Cardiac septum (tissue), 1 donor: ENCODE measurements at regions of chr7 and their contacts with region 1.

Region 1: GRCh38 chr7:1812509-1813393 is 142.7 kb downstream of the ELFN1 start:
- DNase-seq: no peak

Region 2: DNA sequence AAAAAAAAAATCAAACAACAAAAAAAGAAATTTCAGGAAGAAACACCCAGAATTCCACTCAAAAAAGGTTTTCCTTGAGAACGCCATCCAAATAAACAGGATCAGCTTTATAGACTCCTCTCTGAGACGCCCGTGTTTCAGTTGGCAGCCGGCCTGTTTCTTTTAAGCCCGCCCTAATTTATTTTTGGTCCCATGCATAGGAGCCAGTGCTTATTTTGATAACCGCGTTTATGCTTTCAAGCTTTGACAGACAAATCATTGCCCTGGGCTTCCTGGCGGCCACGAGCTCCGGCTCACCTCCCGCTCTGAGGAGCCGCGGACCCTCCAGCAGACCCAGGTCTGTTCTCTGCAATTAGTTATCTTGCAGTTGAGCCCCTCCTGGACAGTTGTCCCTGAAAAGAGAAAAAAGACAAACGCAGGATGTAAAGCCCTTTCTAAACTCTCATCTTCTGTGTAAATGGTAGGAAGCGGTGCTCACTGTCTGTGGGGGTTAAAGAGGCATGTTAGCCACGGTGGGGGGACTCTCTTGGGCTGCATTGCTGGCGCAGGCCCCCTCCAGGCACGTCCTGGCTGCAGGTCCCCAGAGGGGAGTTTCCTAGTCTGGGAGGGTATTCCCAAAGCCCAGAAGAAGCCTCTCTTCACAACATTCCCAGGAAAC is 602.3 kb before region 1 on chr7:
- intact Hi-C with region 1: no loop called
- DNase-seq: no peak

Region 3: DNA sequence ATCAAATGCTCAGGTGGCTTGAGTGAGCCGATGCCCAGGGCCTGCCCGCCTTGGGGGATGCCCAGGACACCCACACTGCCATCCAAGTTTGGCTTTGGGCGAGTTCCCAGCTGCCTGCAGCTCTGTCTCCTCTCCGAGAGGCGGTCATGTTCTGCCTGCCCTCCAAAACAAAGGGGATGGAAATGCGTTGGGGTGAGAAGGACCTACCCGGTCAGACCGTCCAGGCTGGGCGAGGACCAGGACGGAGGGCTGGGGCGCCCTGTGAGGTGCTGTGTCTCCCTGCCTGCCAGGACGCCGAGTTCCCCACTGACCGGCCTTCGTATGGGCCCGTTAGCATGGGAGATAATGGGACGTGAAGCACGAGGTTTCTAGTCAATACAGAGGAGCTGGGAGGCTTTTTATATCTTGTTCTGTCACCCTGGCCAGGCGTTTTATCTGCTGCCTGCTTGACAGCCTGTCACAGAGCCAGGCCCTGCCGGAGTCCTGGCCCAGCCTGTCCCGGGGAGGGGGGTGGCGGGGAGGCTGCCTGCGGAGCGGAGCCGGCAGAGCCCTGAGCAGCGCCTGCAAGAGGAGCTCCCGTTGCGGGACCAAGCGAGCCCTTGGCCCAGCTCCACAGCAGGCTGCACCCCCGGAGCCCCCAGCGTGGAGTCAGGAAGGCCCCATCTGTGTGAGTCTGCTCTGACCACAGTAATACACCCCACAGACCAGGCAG is 164.6 kb before region 1 on chr7:
- intact Hi-C with region 1: no loop called
- DNase-seq: peak; percentile 88

Region 4: DNA sequence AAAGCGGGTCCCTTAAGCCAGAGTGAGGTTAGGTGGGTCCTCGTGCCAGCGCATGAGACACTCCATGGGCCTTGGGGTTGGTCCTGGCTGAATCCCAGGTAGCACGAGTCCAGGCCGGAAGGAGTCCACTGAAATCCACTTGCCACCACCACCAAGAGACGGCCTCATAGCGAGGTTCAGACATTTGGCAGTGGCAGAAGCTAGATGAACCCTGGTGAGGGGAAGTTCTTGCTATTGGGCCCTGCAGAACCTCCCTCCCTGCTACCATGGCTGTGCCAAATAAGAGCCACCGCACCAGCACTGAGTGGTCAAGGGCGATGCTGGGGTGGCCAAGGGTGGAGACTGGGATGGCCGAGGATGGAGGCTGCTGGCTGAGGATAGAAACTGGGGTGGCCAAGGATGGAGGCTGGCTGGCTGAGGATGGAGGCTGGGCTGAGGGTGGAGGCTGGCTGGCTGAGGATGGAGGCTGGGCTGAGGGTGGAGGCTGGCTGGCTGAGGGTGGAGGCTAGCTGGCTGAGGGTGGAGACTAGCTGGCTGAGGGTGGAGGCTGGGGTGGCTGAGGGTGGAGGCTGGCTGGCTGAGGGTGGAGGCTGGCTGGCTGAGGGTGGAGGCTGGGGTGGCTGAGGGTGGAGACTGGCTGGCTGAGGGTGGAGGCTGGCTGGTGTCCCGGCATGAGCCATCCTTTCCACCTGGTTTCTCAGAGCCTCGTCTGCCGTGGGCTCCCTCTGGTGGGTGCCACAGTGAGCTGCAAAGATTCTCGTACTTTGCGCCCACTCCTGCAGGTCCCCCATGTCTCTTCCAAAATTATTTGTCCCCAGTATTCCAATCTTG is 54.5 kb before region 1 on chr7:
- intact Hi-C with region 1: no loop called
- DNase-seq: peak; percentile 80

Region 5: GRCh38 chr7:1781369-1781768 is 31.4 kb before region 1 on chr7:
- intact Hi-C with region 1: no loop called
- DNase-seq: peak; percentile 20

Region 6: DNA sequence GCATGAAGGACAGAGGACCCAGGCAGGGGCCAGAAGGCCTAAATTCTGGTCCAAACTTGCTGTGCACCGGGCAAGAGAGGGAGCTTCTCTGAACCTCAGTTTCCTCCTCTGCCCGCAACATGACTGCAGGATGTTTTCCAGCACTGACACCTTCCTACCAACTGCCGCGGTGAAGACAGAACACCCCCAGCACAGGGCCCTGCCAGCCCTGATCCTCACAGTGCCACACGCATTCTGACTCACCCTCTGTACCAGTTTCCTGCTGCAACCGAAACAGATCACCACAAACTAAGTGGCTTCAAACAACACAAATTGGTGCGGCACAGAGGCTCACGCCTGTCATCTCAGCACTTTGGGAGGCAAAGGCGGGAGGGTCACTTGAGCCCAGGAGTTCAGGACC is 401.9 kb after region 1 on chr7:
- intact Hi-C with region 1: loop called (anchors 5 kb)
- DNase-seq: no peak